K562 (cell line): ENCODE measurements at regions of chr11 and their contacts with region 1.

Region 1: DNA sequence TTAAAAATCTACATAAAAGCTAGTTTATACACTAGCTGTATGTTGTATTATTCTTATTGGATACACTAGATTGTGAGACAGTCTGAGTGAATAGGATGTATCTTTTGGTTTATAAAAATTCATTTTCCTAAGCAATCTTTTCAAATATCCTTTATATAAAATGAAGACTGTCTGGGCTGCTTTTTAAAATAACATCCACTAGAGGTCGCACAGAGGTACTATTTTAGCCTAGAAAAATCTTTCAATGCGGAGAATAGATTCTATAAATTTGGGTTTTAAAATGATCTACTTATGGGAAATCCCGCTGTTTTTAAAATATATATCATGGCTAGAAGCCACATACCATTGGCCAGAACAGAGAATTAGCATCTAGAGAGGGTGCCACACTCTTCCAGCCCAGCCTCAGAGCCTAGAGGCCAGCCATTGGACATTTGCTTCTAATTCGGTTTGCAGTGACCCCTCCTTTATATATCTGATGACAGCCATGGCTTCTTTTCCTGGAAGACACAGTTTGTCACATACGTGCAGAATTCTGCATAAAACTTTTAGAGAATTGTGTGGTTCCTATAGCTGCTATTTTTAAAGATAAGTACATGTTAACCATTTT is 7.3 kb downstream of the C11orf97 start:
- DNase-seq: peak; percentile 13 to 40 (median 18)
- ATAC-seq: peak; percentile 69
- H3K4me3 ChIP-seq: no peak overlapping the region
- H3K27ac ChIP-seq: no peak overlapping the region
- H3K4me1 ChIP-seq: no peaks in the 10 kb centered on the region
- H3K27me3 ChIP-seq: no peaks in the 10 kb centered on the region; a peak in 1 of 5 replicates
- CTCF ChIP-seq: peak; percentile 41 to 70 (median 46); a peak in 5 of 6 replicates
- EP300 ChIP-seq: no peak
- POLR2A ChIP-seq: no peak
- RAD21 ChIP-seq: peak; percentile 74 to 82

Region 2: DNA sequence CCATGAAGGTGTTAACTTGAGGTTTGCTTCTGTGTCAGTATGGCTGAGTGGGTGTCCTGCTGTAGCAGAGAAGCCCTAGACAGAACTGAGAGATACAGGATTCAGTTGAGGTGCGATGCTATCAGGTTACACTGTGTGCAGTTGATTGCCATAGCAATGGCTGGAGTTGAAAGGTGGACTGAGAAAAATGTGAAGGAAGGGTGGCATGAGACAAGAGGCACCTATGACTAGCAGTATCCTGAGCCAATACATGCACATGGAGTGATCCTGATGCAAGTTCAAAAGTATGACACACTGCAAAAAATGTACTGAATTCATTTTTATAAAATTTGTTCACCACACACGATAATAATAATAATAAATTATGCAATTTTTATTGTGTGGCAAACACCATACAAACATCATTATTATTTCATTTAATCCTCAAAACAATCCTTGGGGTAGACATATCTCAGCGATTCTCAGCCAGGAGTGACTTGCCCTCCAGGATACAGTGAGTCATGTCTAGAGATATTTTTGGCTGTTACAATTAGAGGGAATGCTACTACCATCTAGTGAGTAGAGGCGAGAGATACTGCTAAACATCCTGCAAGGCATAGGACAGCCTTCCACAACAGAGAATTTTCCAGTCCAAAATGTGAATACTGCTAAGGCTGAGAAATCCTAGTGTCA is 43.7 kb after region 1 on chr11:
- CTCF ChIA-PET with region 1: interaction called, 3 read pairs
- POLR2A ChIA-PET with region 1: no interaction called
- in situ Hi-C with region 1: no loop called
- intact Hi-C with region 1: loop called (anchors 1 kb)
- DNase-seq: peak in 2 of 4 experiments; percentile 41 to 52
- ATAC-seq: peak; percentile 70
- H3K4me3 ChIP-seq: no peak overlapping the region
- H3K27ac ChIP-seq: no peak overlapping the region
- H3K4me1 ChIP-seq: peaks cover 5 to 37% of the 10 kb centered on the region in 2 experiments
- H3K27me3 ChIP-seq: no peaks in the 10 kb centered on the region
- CTCF ChIP-seq: peak; percentile 23 to 56 (median 27); a peak in 4 of 6 replicates
- EP300 ChIP-seq: no peak
- POLR2A ChIP-seq: no peak
- RAD21 ChIP-seq: peak; percentile 64 to 80

Region 3: DNA sequence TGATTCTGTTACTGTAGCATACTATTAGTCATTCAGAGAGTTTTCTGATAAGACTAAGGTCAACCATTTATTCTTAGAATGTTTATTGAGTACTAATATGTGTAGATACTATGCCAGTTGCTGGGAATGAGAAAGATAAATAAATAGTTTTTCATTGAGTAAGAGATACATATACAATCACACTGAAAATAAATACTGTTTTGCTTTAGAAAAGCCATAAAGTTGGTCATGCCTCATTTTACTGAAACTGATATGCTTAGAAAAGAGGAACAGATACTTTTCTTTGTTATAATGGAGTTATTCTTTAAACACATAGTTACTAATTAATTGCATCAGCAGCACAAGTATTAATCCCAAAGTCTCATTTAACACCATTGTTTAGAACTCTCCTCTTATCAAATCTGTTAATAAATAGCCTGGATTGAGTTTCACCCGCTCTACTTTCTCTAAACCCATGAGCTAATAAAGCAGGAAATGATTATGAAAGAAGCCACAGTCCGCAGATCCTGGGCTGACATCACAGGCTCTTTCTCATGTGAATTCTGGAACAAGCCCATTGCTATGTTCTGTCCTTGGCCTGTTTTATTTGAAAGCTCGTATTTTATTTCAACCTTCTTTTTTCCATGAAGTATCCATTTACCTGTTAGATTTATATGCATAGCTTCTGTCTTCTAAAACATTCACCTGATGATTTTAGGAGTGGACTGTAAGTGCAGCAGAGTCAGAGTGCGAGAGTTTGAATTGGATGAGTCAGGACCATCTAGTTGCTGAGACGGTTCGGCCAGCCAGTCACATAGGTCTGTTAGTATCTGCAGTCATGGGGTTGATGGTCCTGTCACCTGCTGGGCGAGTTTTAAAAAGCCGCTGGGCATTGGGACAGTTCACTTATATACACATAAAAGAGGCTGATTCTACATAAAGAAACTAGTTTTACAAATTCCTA is 83.1 kb after region 1 on chr11:
- CTCF ChIA-PET with region 1: interaction called, 9 read pairs
- POLR2A ChIA-PET with region 1: interaction called, 3 read pairs
- in situ Hi-C with region 1: loop called (anchors 5 kb)
- intact Hi-C with region 1: loop called (anchors 1 kb)
- DNase-seq: peak; percentile 20 to 51 (median 26)
- ATAC-seq: peak; percentile 86
- H3K4me3 ChIP-seq: no peak overlapping the region
- H3K27ac ChIP-seq: no peak overlapping the region
- H3K4me1 ChIP-seq: no peaks in the 10 kb centered on the region
- H3K27me3 ChIP-seq: 0 out of 5 replicates have a peak, but pooled peaks cover 0 to 3% of the 10 kb centered on the region in 2 experiments
- CTCF ChIP-seq: peak; percentile 23 to 59 (median 34); a peak in 3 of 6 replicates
- EP300 ChIP-seq: no peak
- POLR2A ChIP-seq: no peak
- RAD21 ChIP-seq: peak; percentile 38 to 53

Region 4: GRCh38 chr11:94767761-94768601 is 248.4 kb after region 1 on chr11 and contains the start of gene AMOTL1:
- CTCF ChIA-PET with region 1: no interaction called
- POLR2A ChIA-PET with region 1: no interaction called
- in situ Hi-C with region 1: no loop called
- intact Hi-C with region 1: loop called (anchors 10 kb)
- DNase-seq: peak; percentile 73 to 89 (median 74)
- ATAC-seq: peak; percentile 91
- H3K4me3 ChIP-seq: peak within 1 kb of the TSS; percentile 59
- H3K27ac ChIP-seq: peak within 1 kb of the TSS; percentile 87
- H3K4me1 ChIP-seq: peaks cover 20 to 25% of the 10 kb centered on the region in 2 experiments
- H3K27me3 ChIP-seq: no peaks in the 10 kb centered on the region; a peak in 1 of 5 replicates
- CTCF ChIP-seq: peak in 2 of 3 experiments; percentile 23 to 32; a peak in 3 of 6 replicates
- EP300 ChIP-seq: no peak
- POLR2A ChIP-seq: peak; percentile 70
- RAD21 ChIP-seq: peak; percentile 50 to 51
- polyA plus RNA-seq, gene AMOTL1: 4.0 to 4.7 TPM

Region 5: DNA sequence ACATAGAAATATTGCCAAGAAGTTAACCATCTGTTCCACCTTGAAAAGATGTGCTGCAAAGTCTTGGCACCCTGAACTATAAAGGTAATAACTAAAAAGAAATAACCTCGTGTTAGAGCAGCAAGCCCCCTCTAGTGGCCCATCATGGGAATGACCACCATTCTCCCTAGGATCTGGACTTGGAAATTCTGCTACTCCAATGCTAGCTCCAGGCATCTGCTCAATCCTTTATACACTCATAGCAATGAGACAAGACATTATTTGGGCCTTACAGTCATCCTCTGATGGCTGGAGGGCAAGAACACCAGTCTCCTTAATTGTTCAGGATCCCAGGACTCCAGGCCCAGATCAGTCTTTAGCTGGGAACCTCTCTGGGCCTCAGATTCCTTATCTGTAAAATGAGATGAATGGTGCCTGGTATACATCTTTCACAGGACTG is 377.8 kb after region 1 on chr11:
- CTCF ChIA-PET with region 1: no interaction called
- POLR2A ChIA-PET with region 1: no interaction called
- in situ Hi-C with region 1: no loop called
- intact Hi-C with region 1: loop called (anchors 10 kb)
- DNase-seq: peak; percentile 46 to 64 (median 58)
- ATAC-seq: peak; percentile 84
- H3K4me3 ChIP-seq: no peak overlapping the region
- H3K27ac ChIP-seq: no peak overlapping the region
- H3K4me1 ChIP-seq: no peaks in the 10 kb centered on the region
- H3K27me3 ChIP-seq: no peaks in the 10 kb centered on the region
- CTCF ChIP-seq: peak; percentile 71 to 86 (median 84)
- EP300 ChIP-seq: no peak
- POLR2A ChIP-seq: no peak
- RAD21 ChIP-seq: peak; percentile 62 to 80